ENCODE measurements at regions of chr3 and their contacts with region 1.

Region 1: DNA sequence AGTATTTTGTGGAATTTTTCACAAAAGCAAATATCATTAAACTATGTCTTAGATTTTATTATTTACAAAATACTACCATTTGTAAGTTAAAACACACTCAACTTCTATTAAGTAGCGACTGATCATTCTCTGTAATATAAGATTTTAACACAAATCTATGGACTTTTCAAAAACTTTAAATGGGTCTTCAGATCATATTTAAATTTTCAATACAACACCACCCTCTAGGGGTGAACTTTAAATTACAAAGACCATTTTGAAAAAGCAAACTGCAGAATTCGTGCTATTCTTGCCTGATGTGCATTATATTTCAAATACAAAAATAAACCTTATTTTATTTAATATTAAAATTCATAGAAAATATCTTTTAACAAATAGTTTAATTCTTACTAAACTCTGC is 8.2 kb upstream of the VGLL4 start:
- DNase-seq: no peak
- H3K4me3 ChIP-seq: no peak overlapping the region
- H3K27ac ChIP-seq: no peak overlapping the region
- H3K27me3 ChIP-seq: no peaks in the 10 kb centered on the region
- CTCF ChIP-seq: peak; percentile 58 to 94 (median 77)

Region 2: DNA sequence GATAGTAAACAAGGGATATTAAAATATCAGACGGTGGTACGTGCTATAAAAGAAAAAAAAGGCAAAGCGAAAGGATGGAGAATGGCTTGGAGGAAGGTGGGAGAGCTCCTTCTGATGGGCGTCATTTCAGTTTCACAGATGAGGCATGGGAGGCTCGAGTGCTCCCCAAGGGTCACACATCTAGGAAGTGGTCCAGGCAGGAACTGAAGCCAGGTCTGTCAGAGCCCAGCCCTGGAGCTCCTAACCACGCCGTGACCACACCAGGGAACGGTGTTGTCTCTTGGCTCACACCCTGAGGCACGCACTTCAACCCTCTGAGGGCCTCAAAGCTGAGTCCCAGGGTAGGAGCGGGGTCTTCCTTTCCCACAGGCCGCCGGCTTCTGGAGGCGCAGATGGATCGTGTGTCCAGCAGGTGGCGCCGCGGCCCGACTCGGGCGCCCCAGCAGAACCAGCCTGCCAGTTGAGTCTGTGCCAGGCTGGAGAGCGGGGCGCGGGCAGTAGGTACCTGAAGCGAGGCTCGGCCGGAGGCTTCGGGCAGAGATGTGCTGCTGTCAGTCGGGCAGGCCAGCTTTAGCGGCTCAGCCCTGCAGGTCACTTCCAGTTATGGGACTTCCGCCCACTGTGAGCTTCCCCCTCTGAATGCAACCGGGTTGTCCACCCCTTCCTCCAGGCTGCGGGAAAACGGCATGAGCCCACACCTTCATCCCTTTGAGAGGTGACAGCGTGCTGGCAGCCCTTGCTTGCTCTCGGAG is 591.2 kb before region 1 on chr3:
- intact Hi-C with region 1: loop called in 1 of 2 experiments (anchors 10 kb)
- DNase-seq: peak; percentile 35 to 86 (median 70)
- H3K4me3 ChIP-seq: peak overlapping the region in 57 of 59 donors; percentile 9 to 67 (median 47)
- H3K27ac ChIP-seq: peak overlapping the region in 34 of 59 donors; percentile 3 to 75 (median 40)
- H3K27me3 ChIP-seq: peaks cover 0 to 13% (median 0%) of the 10 kb centered on the region in 45 donors
- CTCF ChIP-seq: peak; percentile 78 to 98 (median 95)

Region 3: DNA sequence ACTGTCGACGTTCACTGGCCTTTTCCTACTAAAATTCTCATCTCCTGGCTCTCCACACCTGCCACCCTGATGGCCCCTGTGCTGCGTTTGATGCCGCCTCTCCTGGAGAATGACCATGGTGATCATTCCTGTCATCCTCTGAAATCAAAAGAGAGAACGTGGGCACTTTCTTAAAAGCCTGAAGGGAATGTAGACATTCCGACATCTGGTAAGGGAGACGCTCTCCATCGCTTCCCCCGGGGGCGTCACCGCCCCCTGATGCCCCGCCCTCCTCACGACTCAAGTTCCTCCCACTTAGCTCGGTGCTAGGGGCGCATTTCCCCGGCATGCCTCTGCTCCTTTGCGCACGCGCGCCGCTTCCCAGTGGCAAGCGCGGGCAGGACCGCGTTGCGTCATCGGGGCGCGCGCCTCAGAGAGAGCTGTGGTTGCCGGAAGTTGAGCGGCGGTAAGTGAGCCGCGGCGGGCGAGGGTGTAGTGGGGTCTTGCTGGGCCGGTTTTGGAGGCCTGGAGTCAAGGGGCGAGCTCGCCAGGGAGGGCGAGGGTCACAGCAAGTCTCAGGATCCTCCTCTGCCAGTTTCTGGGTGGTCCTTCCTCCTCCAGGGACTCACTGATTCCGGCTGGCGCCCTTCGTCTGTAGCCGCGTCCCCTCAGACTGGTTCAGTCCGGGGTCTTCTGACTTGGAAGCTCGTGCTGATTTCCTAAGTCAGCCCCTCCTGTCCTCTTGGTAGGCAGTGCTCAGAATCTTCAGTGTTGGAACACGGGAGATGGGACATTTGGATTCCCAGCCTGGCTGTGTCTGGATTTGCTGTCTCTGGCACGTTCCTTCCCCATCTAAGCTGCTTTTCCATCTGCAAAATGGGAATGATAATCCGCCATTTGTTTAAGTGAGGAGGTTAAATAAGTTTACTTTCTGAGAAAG is 379.7 kb before region 1 on chr3 and contains the start of gene ATG7:
- intact Hi-C with region 1: loop called in 1 of 2 experiments (anchors 10 kb)
- DNase-seq: peak; percentile 93 to 98 (median 96)
- H3K4me3 ChIP-seq: peak within 1 kb of the TSS; percentile 70 to 100 (median 90)
- H3K27ac ChIP-seq: peak within 1 kb of the TSS in 58 of 59 donors; percentile 26 to 97 (median 84)
- H3K27me3 ChIP-seq: no peaks in the 10 kb centered on the region
- CTCF ChIP-seq: peak in 48 of 56 donors; percentile 19 to 69 (median 38)
- total RNA-seq, gene ATG7: 48.9 to 92.7 (median 70.5) TPM

Region 4: GRCh38 chr3:11379233-11379823 is 272.6 kb before region 1 on chr3:
- intact Hi-C with region 1: loop called (anchors 2 to 5 kb)
- DNase-seq: no peak
- H3K4me3 ChIP-seq: peak overlapping the region in 46 of 59 donors; percentile 1 to 57 (median 27)
- H3K27ac ChIP-seq: peak overlapping the region in 48 of 59 donors; percentile 7 to 79 (median 60)
- H3K27me3 ChIP-seq: no peaks in the 10 kb centered on the region
- CTCF ChIP-seq: peak; percentile 38 to 89 (median 78)

Region 5: GRCh38 chr3:11385891-11386290 is 266.0 kb before region 1 on chr3:
- intact Hi-C with region 1: loop called in 1 of 2 experiments (anchors 2 kb)
- DNase-seq: no peak
- H3K4me3 ChIP-seq: no peak overlapping the region
- H3K27ac ChIP-seq: no peak overlapping the region
- H3K27me3 ChIP-seq: no peaks in the 10 kb centered on the region
- CTCF ChIP-seq: no peak

Region 6: DNA sequence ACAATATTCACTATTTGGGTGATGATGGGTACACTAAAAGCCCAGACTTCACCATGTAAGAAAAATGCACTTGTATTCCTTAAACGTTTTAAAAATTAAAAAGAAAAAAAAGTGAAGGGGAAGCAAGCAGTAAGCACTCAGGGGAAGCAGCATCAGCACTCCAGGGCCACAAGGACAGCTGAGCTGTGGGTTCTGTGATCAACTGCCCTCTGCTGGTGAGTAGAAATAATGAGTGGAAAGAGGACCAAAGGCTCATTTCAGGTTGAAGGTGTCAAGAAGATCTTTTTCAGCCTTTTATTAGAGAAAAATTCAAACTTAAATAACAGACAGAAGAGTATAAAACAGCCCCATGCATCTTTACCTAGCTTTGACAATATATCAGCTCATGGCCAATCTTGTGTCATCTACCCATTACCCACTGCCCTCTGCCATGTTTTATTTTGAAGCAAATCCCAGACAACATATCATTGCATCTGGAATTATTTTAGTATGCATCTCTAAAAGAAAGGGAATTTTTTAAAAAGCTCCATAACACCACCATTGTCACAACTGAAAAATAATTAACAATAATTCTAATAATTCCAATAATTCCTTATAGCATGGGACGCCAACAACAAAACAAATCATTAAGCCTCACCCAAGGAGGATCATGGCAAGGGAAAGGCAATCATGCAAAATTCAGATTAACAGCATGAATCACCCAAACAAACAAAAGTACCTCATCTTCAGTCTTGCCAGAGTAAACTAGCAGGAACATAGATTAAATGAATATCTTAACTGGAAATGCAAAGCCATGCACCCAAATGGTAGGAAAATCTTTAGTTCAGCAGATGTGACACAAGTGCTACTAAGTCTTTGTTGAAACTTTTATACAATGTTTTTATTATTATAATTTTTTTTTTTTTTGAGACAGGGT is 152.3 kb after region 1 on chr3:
- intact Hi-C with region 1: loop called (anchors 5 to 10 kb)
- DNase-seq: peak in 5 of 10 donors; percentile 24 to 43 (median 38)
- H3K4me3 ChIP-seq: no peak overlapping the region
- H3K27ac ChIP-seq: no peak overlapping the region
- H3K27me3 ChIP-seq: no peaks in the 10 kb centered on the region
- CTCF ChIP-seq: peak; percentile 47 to 85 (median 76)

Region 7: DNA sequence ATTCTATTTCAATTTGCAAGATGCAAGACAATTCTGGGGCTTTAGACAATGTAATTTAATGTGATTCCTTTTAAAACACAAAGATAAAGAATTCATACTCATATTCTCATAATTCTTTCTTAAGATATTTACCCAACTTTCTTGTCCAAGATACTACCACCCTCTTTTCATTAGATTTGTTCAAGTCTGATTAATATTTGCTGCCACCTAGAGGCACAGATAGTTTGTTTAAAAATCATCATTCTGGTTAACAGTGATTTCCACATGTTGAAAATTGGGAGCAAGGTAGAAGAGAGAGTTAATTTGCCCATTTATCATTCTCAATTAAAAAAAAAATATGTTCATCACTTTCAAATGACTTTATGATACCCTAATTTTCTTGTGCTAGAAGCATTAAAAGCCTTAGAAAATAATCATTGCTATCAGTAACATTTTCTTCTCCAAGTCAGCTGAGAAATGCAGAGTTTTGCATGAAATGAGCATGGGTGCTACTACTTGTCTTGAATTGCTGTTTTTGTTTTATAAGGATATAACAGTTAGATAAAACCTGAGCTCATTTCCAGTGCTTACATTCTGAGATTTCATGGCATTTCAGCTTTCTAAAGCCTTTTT is 183.2 kb after region 1 on chr3:
- intact Hi-C with region 1: loop called (anchors 5 to 10 kb)
- DNase-seq: no peak
- H3K4me3 ChIP-seq: no peak overlapping the region
- H3K27ac ChIP-seq: no peak overlapping the region
- H3K27me3 ChIP-seq: no peaks in the 10 kb centered on the region
- CTCF ChIP-seq: peak; percentile 33 to 74 (median 60)

Region 8: DNA sequence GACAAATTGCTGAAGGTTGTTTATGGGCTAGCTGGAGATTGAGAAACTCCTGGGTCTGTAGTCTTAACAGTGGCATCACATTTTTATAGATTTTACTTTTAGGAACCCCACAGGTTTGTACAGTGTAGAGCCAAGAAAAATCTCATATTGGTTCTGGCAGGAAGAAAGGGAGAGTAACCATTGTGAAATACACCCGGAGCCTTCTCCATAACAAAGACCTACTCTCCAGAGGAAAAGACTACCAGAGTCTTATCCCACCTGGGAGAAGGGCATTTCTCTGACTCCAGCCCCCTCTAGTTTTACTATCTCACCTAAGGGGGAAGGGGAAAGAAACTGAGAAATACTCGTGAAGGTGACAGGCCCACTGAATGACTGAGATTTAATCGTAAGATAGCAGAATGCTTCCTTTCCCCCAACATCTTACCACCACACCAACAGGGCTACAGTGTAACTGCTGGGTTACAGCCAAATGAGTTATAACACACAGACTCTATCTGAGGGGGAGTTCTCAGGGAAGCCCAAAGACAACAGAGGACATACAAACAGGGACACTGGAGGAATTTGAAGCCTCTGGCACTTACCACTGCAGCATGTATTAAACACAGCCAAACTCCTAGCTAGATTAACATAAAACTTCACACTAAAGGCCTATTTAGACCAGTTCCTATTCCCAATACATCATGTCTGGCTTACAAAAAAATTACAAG is 408.4 kb after region 1 on chr3:
- intact Hi-C with region 1: no loop called
- DNase-seq: no peak
- H3K4me3 ChIP-seq: no peak overlapping the region
- H3K27ac ChIP-seq: no peak overlapping the region
- H3K27me3 ChIP-seq: peaks cover 0 to 6% (median 0%) of the 10 kb centered on the region in 45 donors
- CTCF ChIP-seq: no peak